K562 (cell line): ENCODE measurements at regions of chr7 and their contacts with region 1.

Region 1: GRCh38 chr7:79673969-79674368 is 220.5 kb upstream of the MAGI2 start:
- DNase-seq: no peak
- ATAC-seq: no peak
- H3K4me3 ChIP-seq: no peak overlapping the region
- H3K27ac ChIP-seq: no peak overlapping the region
- H3K4me1 ChIP-seq: no peaks in the 10 kb centered on the region
- H3K27me3 ChIP-seq: no peaks in the 10 kb centered on the region
- CTCF ChIP-seq: no peak
- EP300 ChIP-seq: no peak
- POLR2A ChIP-seq: no peak
- RAD21 ChIP-seq: no peak

Region 2: DNA sequence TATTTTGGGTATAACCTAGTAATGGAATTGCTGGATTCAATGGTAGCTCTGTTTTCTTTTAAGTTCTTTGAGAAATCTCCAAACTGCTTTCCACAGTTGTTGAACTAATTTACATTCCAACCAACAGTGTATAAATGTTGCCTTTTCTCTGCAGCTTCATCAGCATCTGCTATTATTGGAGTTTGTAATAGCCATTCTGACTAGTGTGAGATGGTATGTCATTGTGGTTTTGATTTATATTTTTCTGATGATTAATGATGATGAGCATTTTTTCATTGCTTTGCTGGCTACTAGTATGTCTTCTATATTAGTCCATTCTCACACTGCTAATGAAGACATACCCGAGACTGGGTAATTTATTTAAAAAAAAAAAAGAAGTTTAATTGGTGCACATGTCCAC is 28.1 kb after region 1 on chr7:
- CTCF ChIA-PET with region 1: no interaction called
- POLR2A ChIA-PET with region 1: no interaction called
- in situ Hi-C with region 1: no loop called
- intact Hi-C with region 1: no loop called
- DNase-seq: no peak
- ATAC-seq: no peak
- H3K4me3 ChIP-seq: no peak overlapping the region
- H3K27ac ChIP-seq: no peak overlapping the region
- H3K4me1 ChIP-seq: no peaks in the 10 kb centered on the region
- H3K27me3 ChIP-seq: no peaks in the 10 kb centered on the region
- CTCF ChIP-seq: no peak
- EP300 ChIP-seq: no peak
- POLR2A ChIP-seq: no peak
- RAD21 ChIP-seq: no peak

Region 3: GRCh38 chr7:79820387-79820786 is 146.4 kb after region 1 on chr7:
- CTCF ChIA-PET with region 1: no interaction called
- POLR2A ChIA-PET with region 1: no interaction called
- in situ Hi-C with region 1: no loop called
- intact Hi-C with region 1: no loop called
- DNase-seq: no peak
- ATAC-seq: no peak
- H3K4me3 ChIP-seq: no peak overlapping the region
- H3K27ac ChIP-seq: no peak overlapping the region
- H3K4me1 ChIP-seq: no peaks in the 10 kb centered on the region
- H3K27me3 ChIP-seq: no peaks in the 10 kb centered on the region
- CTCF ChIP-seq: no peak
- EP300 ChIP-seq: no peak
- POLR2A ChIP-seq: no peak
- RAD21 ChIP-seq: no peak

Region 4: DNA sequence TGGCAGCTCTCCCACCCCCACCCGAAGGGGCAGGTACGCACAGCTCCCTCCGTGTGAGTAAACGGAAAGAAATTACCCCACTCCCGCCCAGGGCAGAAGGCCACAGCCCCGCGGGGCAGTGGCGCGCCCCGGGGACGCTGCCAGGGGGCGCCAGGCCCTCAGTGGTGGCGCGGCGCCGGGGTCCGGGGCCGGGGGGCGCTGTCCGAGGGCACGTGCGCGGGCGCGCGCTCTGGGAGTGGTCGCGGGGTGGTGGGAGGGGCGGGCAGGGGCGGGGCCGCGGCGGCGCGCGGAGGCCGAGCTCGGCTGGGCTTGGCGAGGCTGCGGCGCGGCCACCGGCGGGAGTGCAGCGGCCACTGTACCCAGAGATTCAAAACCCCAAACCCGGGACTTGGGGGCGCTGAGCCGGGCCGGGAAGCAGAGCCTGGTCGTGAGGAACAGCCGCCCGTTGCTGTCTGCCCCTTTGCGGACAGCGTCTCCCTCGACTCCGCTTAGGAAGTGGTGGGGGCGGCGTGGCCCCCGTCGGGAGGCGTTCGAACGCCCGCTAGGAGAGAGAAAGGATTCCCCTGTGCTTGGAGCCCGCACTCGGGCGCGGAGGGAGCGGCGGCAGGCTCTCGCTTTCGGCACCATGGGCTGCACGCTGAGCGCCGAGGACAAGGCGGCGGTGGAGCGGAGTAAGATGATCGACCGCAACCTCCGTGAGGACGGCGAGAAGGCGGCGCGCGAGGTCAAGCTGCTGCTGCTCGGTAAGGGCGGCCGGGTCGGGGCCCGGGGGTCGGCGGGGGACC is 460.8 kb after region 1 on chr7 and contains the start of gene GNAI1:
- CTCF ChIA-PET with region 1: no interaction called
- POLR2A ChIA-PET with region 1: no interaction called
- in situ Hi-C with region 1: loop called (anchors 5 kb)
- intact Hi-C with region 1: no loop called
- DNase-seq: peak in 2 of 4 experiments; percentile 2 to 23
- ATAC-seq: peak; percentile 50
- H3K4me3 ChIP-seq: 0 out of 2 replicates have a peak within 1 kb of the TSS, but pooled peaks have one; percentile 5
- H3K27ac ChIP-seq: no peak within 1 kb of the TSS
- H3K4me1 ChIP-seq: peaks cover 0 to 11% of the 10 kb centered on the region in 2 experiments; a peak in 1 of 5 replicates
- H3K27me3 ChIP-seq: peaks cover 0 to 3% of the 10 kb centered on the region in 2 experiments; a peak in 1 of 5 replicates
- CTCF ChIP-seq: no peak
- EP300 ChIP-seq: no peak
- POLR2A ChIP-seq: no peak
- RAD21 ChIP-seq: no peak
- polyA plus RNA-seq, gene GNAI1: 0.03 TPM in 1 of 2 experiments, not detected in the other